PC-9 (cell line): ENCODE measurements at regions of chr4 and their contacts with region 1.

Region 1: DNA sequence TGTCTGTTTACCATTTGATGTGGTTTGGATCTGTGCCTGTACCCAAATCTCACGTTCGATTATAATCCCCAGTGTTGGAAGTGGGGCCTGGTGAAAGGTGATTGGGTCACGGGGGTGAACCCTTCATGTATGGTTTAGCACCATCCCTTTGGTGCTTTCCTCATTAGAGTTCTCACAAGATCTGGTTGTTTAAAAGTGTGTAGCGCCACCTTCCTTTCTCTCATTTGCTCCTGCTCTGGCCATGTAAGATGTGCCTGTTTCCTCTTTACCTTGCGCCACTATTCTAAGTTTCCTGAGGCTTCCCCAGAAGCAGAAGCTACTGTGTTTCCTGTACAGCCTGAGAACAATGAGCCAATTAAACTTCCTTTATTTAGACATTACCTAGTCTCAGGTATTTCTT is 610.7 kb upstream of the ADGRL3 start:
- DNase-seq: no peak
- H3K4me3 ChIP-seq: no peak overlapping the region
- H3K27ac ChIP-seq: no peak overlapping the region
- H3K4me1 ChIP-seq: no peaks in the 10 kb centered on the region
- H3K27me3 ChIP-seq: no peaks in the 10 kb centered on the region
- CTCF ChIP-seq: no peak

Region 2: DNA sequence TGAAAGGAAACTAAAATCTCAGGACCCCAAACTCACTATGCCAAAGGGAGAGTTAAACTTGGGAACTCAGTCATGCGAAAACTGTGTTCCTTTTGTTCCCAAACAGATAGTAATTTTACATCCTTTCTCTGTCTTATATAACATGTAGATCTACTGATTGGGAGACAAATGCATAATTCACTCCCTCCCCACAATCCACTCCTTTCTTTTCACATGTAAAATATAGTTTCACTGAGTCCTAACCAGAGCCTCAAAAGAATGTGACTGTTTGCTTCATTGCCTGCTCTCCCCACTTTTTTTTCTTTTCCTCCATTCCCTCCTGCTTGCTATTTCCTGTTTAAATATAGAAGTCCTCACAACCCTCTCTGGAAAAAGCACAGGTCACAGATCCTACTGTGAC is 88.6 kb before region 1 on chr4:
- CTCF ChIA-PET with region 1: no interaction called
- POLR2A ChIA-PET with region 1: no interaction called
- intact Hi-C with region 1: no loop called
- DNase-seq: no peak
- H3K4me3 ChIP-seq: no peak overlapping the region
- H3K27ac ChIP-seq: no peak overlapping the region
- H3K4me1 ChIP-seq: no peaks in the 10 kb centered on the region
- H3K27me3 ChIP-seq: no peaks in the 10 kb centered on the region
- CTCF ChIP-seq: no peak

Region 3: GRCh38 chr4:60605651-60606354 is 16.4 kb after region 1 on chr4:
- CTCF ChIA-PET with region 1: no interaction called
- POLR2A ChIA-PET with region 1: no interaction called
- intact Hi-C with region 1: loop called (anchors 2 kb)
- DNase-seq: no peak
- H3K4me3 ChIP-seq: no peak overlapping the region
- H3K27ac ChIP-seq: no peak overlapping the region
- H3K4me1 ChIP-seq: no peaks in the 10 kb centered on the region
- H3K27me3 ChIP-seq: no peaks in the 10 kb centered on the region
- CTCF ChIP-seq: no peak

Region 4: GRCh38 chr4:60757986-60758385 is 168.6 kb after region 1 on chr4:
- CTCF ChIA-PET with region 1: no interaction called
- POLR2A ChIA-PET with region 1: no interaction called
- intact Hi-C with region 1: no loop called
- DNase-seq: no peak
- H3K4me3 ChIP-seq: no peak overlapping the region
- H3K27ac ChIP-seq: no peak overlapping the region
- H3K4me1 ChIP-seq: no peaks in the 10 kb centered on the region
- H3K27me3 ChIP-seq: no peaks in the 10 kb centered on the region
- CTCF ChIP-seq: no peak